Naive thymus-derived CD4-positive, alpha-beta T cell (primary cell): ENCODE measurements at regions of chr4 and their contacts with region 1.

Region 1: DNA sequence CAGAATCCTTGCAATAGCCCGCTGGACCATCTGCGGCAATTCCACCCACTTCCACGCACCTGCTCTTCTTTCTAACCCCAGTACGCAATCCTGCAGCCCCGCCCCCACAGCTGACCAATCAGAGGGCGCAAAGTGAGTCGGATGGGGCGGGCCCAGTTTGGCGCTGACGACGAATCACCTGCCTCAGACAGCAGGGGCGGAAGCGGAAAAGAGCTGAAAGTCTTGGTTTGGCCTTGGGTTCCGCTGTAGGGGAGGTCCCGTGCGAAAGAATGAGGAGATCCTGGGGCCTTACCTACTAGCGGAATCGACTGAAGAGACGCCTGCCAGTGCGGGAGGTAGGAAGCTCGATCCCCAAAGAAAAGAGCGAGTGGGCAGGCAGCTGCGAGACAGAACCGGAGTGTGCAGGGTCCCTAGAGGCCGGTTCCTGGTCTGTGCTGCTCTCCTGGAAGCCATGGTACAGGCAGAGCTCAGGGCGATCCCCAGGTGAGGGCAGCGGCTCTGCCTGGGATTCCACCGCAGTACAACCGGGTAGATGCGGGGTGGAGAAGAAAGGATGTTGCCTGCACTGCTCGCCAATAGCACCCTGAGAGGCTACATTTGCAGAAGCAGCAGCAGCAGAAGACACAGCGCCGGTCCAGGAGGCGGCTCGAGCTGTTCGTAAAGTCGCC is at the start of gene TMEM184C:
- DNase-seq: peak; percentile 97 to 99 (median 98)
- ATAC-seq: peak; percentile 97
- H3K4me3 ChIP-seq: peak within 1 kb of the TSS; percentile 89
- H3K4me3 Mint-ChIP-seq: peak within 1 kb of the TSS; percentile 86 to 98 (median 94)
- H3K27ac ChIP-seq: peak within 1 kb of the TSS; percentile 87
- H3K27ac Mint-ChIP-seq: peak within 1 kb of the TSS; percentile 92 to 99 (median 95)
- H3K4me1 ChIP-seq: peaks cover 21 to 30% of the 10 kb centered on the region in 2 donors
- H3K4me1 Mint-ChIP-seq: peaks cover 21 to 48% (median 33%) of the 10 kb centered on the region in 7 donors
- H3K27me3 ChIP-seq: no peaks in the 10 kb centered on the region
- H3K27me3 Mint-ChIP-seq: peaks cover 0 to 22% (median 4%) of the 10 kb centered on the region in 5 donors
- total RNA-seq, gene TMEM184C: 13.7 to 27.4 (median 19.0) TPM

Region 2: GRCh38 chr4:146175541-146176453 is 1441.5 kb before region 1 on chr4 and contains the start of gene LSM6:
- CTCF ChIA-PET with region 1: no interaction called
- POLR2A ChIA-PET with region 1: no interaction called
- intact Hi-C with region 1: loop called in 1 of 2 experiments (anchors 1 kb)
- DNase-seq: peak; percentile 63 to 86 (median 84)
- ATAC-seq: peak; percentile 94
- H3K4me3 ChIP-seq: peak within 1 kb of the TSS; percentile 87
- H3K4me3 Mint-ChIP-seq: peak within 1 kb of the TSS; percentile 88 to 95 (median 92)
- H3K27ac ChIP-seq: peak within 1 kb of the TSS; percentile 94
- H3K27ac Mint-ChIP-seq: peak within 1 kb of the TSS; percentile 82 to 99 (median 97)
- H3K4me1 ChIP-seq: peaks cover 25 to 31% of the 10 kb centered on the region in 2 donors
- H3K4me1 Mint-ChIP-seq: peaks cover 29 to 66% (median 57%) of the 10 kb centered on the region in 7 donors
- H3K27me3 ChIP-seq: no peaks in the 10 kb centered on the region
- H3K27me3 Mint-ChIP-seq: no peaks in the 10 kb centered on the region
- total RNA-seq, gene LSM6: 24.7 to 49.7 (median 46.2) TPM

Region 3: DNA sequence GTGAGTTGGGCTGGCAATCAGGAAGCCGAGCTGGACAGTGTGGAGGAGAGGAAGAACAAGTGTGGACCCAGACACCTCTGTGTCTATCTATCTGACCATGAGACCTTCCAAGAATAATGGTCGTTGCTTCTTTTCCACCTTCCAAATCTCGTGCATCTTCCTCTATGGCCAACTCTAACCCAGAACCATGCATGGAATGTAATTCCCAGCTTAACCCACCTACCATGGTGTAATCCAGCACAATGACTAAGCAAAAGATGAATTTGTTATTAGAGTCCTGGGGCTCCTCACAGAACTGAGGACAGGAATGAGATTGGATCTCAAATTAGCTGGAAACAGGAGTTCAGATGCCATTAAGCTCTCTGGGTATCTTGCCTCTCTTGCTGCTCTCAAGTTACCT is 17.5 kb before region 1 on chr4:
- CTCF ChIA-PET with region 1: no interaction called
- POLR2A ChIA-PET with region 1: no interaction called
- intact Hi-C with region 1: no loop called
- DNase-seq: no peak
- ATAC-seq: no peak
- H3K4me3 ChIP-seq: no peak overlapping the region
- H3K4me3 Mint-ChIP-seq: no peak overlapping the region
- H3K27ac ChIP-seq: no peak overlapping the region
- H3K27ac Mint-ChIP-seq: no peak overlapping the region
- H3K4me1 ChIP-seq: no peaks in the 10 kb centered on the region
- H3K4me1 Mint-ChIP-seq: no peaks in the 10 kb centered on the region
- H3K27me3 ChIP-seq: no peaks in the 10 kb centered on the region
- H3K27me3 Mint-ChIP-seq: peaks cover 0 to 6% (median 0%) of the 10 kb centered on the region in 5 donors

Region 4: DNA sequence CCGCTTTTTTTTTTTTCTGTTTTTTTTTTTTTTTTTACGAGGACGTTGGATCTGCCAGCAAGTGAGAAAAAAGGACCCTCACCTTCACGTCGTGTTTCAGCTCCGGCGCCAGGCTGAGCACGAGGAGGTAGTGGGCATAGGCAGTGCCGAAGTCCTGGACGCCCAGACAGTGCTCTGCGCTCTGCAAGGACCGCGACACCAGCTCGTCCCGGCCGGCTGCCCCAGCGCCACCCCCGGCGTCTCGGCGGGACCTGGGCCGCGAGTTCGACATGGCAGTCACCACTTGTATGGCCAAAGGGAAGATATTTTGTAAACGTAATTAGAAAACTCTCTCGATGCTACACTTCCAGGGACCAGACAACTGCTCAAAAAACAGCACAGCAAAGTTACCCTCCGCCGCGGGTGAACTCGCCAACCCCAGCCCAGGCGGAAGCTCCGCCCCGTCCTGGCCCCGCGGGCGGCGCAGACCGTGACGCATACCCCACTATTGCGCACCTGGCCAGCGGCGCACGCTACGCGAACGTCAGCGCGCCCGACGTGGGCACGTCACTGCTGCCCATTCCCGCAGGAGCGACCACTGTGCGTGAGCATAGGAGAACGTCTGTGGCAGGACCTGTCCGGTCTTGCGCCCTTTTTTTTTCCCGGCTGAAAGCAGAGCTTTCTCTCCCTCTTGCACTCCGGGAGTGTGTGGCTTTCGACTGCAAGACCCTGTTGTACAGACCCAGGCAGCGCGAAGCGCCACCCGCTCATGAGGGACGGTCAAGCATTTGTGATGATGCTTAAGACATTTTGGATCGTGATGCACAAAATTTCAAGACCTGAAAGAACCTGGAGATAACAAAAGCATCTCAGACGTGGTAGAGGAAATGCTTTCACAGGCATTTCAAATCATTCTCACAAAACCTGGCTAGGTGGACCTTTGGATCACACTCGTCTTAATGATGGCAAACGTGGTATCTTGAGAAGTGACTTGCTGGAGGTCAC is 66.7 kb after region 1 on chr4 and contains the start of gene PRMT9:
- CTCF ChIA-PET with region 1: no interaction called
- POLR2A ChIA-PET with region 1: interaction called, 39 read pairs
- intact Hi-C with region 1: loop called (anchors 1 kb)
- DNase-seq: peak; percentile 79 to 90 (median 85)
- ATAC-seq: peak; percentile 98
- H3K4me3 ChIP-seq: peak within 1 kb of the TSS; percentile 97
- H3K4me3 Mint-ChIP-seq: peak within 1 kb of the TSS; percentile 89 to 100 (median 97)
- H3K27ac ChIP-seq: peak within 1 kb of the TSS; percentile 95
- H3K27ac Mint-ChIP-seq: peak within 1 kb of the TSS; percentile 86 to 99 (median 97)
- H3K4me1 ChIP-seq: peaks cover 4 to 16% of the 10 kb centered on the region in 2 donors
- H3K4me1 Mint-ChIP-seq: peaks cover 15 to 47% (median 38%) of the 10 kb centered on the region in 7 donors
- H3K27me3 ChIP-seq: no peaks in the 10 kb centered on the region
- H3K27me3 Mint-ChIP-seq: peaks cover 0 to 11% (median 2%) of the 10 kb centered on the region in 5 donors
- total RNA-seq, gene PRMT9: 9.7 to 15.9 (median 10.8) TPM

Region 5: DNA sequence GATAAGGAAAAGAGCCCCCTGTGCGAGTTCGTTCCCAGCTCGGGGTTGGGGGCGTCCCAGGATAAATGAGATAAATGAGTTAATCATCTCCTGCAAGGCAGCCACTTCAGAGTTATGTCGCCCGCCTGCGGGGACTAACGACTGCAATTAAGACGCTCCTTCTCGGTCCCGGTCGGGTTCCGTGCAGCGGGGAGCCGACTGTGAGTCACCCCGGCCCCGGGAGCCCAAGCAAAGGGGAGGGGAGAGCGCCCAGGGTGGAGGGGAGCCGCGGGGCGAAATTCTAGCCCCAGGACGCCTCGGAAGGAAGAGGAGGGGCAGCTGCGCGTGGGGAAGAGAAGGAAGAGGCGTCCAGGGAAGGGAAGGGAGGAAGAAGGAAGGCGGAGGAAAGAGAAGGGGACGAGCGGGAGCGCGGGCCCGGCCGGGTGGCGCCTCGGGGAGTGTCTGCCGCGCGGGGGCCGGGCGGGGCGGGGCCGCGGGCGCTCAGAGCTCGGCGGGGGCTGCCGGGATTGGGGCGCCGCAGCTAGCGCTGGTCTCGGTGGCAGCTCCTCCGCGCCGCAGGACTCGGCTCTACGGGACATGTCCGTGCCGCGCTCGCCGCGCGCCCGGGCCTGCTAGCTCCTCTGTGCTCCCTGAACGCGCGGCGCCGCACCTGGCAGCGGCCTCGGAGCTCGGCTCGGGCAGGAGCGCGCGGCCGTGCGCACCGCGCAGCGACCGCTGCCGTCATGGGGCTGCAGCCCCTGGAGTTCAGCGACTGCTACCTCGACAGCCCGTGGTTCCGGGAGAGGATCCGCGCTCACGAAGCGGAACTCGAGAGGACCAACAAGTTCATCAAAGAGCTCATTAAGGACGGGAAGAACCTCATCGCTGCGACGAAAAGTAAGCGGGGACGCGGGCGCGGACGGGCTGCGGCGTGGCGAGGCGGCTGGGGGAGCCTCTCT is 114.5 kb after region 1 on chr4 and contains the start of gene ARHGAP10:
- CTCF ChIA-PET with region 1: no interaction called
- POLR2A ChIA-PET with region 1: interaction called, 11 read pairs
- intact Hi-C with region 1: loop called (anchors 1 kb)
- DNase-seq: peak; percentile 34 to 74 (median 54)
- ATAC-seq: peak; percentile 79
- H3K4me3 ChIP-seq: peak within 1 kb of the TSS; percentile 76
- H3K4me3 Mint-ChIP-seq: peak within 1 kb of the TSS; percentile 89 to 97 (median 92)
- H3K27ac ChIP-seq: peak within 1 kb of the TSS; percentile 63
- H3K27ac Mint-ChIP-seq: peak within 1 kb of the TSS; percentile 75 to 93 (median 88)
- H3K4me1 ChIP-seq: peaks cover 14 to 15% of the 10 kb centered on the region in 2 donors
- H3K4me1 Mint-ChIP-seq: peaks cover 13 to 42% (median 24%) of the 10 kb centered on the region in 7 donors
- H3K27me3 ChIP-seq: no peaks in the 10 kb centered on the region
- H3K27me3 Mint-ChIP-seq: peaks cover 0 to 41% (median 0%) of the 10 kb centered on the region in 5 donors
- total RNA-seq, gene ARHGAP10: 2.9 to 8.5 (median 3.2) TPM

Region 6: GRCh38 chr4:147799986-147800555 is 182.8 kb after region 1 on chr4:
- CTCF ChIA-PET with region 1: no interaction called
- POLR2A ChIA-PET with region 1: no interaction called
- intact Hi-C with region 1: loop called in 1 of 2 experiments (anchors 5 kb)
- DNase-seq: peak in 8 of 9 donors; percentile 5 to 64 (median 24)
- ATAC-seq: peak; percentile 95
- H3K4me3 ChIP-seq: no peak overlapping the region
- H3K4me3 Mint-ChIP-seq: peak overlapping the region in 2 of 10 donors; percentile 40 to 81
- H3K27ac ChIP-seq: no peak overlapping the region
- H3K27ac Mint-ChIP-seq: peak overlapping the region in 5 of 9 donors; percentile 22 to 79 (median 45)
- H3K4me1 ChIP-seq: peaks cover 7 to 15% of the 10 kb centered on the region in 2 donors
- H3K4me1 Mint-ChIP-seq: peaks cover 9 to 53% (median 12%) of the 10 kb centered on the region in 7 donors
- H3K27me3 ChIP-seq: no peaks in the 10 kb centered on the region
- H3K27me3 Mint-ChIP-seq: peaks cover 3 to 27% (median 7%) of the 10 kb centered on the region in 5 donors

Region 7: GRCh38 chr4:147891476-147892115 is 274.3 kb after region 1 on chr4:
- CTCF ChIA-PET with region 1: no interaction called
- POLR2A ChIA-PET with region 1: no interaction called
- intact Hi-C with region 1: no loop called
- DNase-seq: no peak
- ATAC-seq: no peak
- H3K4me3 ChIP-seq: no peak overlapping the region
- H3K4me3 Mint-ChIP-seq: no peak overlapping the region
- H3K27ac ChIP-seq: no peak overlapping the region
- H3K27ac Mint-ChIP-seq: no peak overlapping the region
- H3K4me1 ChIP-seq: no peaks in the 10 kb centered on the region
- H3K4me1 Mint-ChIP-seq: no peaks in the 10 kb centered on the region
- H3K27me3 ChIP-seq: no peaks in the 10 kb centered on the region
- H3K27me3 Mint-ChIP-seq: no peaks in the 10 kb centered on the region

Region 8: GRCh38 chr4:148051403-148051802 is 434.1 kb after region 1 on chr4:
- CTCF ChIA-PET with region 1: no interaction called
- POLR2A ChIA-PET with region 1: no interaction called
- intact Hi-C with region 1: loop called (anchors 2 to 5 kb)
- DNase-seq: no peak
- ATAC-seq: no peak
- H3K4me3 ChIP-seq: peak overlapping the region; percentile 1
- H3K4me3 Mint-ChIP-seq: peak overlapping the region in 6 of 10 donors; percentile 5 to 82 (median 66)
- H3K27ac ChIP-seq: peak overlapping the region; percentile 72
- H3K27ac Mint-ChIP-seq: peak overlapping the region; percentile 82 to 99 (median 93)
- H3K4me1 ChIP-seq: peaks cover 51 to 54% of the 10 kb centered on the region in 2 donors
- H3K4me1 Mint-ChIP-seq: peaks cover 44 to 69% (median 66%) of the 10 kb centered on the region in 7 donors
- H3K27me3 ChIP-seq: no peaks in the 10 kb centered on the region
- H3K27me3 Mint-ChIP-seq: no peaks in the 10 kb centered on the region

Region 9: GRCh38 chr4:148376151-148376550 is 758.8 kb after region 1 on chr4:
- CTCF ChIA-PET with region 1: no interaction called
- POLR2A ChIA-PET with region 1: no interaction called
- intact Hi-C with region 1: loop called in 1 of 2 experiments (anchors 10 kb)
- DNase-seq: peak in 7 of 9 donors; percentile 64 to 84 (median 76)
- ATAC-seq: peak; percentile 86
- H3K4me3 ChIP-seq: peak overlapping the region; percentile 37
- H3K4me3 Mint-ChIP-seq: peak overlapping the region in 9 of 10 donors; percentile 67 to 88 (median 82)
- H3K27ac ChIP-seq: peak overlapping the region; percentile 59
- H3K27ac Mint-ChIP-seq: peak overlapping the region in 8 of 9 donors; percentile 88 to 99 (median 92)
- H3K4me1 ChIP-seq: peaks cover 0 to 8% of the 10 kb centered on the region in 2 donors
- H3K4me1 Mint-ChIP-seq: peaks cover 6 to 61% (median 44%) of the 10 kb centered on the region in 7 donors
- H3K27me3 ChIP-seq: no peaks in the 10 kb centered on the region
- H3K27me3 Mint-ChIP-seq: no peaks in the 10 kb centered on the region